Natural killer cell (primary cell): ENCODE measurements at regions of chr14 and their contacts with region 1.

Region 1: GRCh38 chr14:57268161-57269069 is at the starts of genes AP5M1 and EXOC5:
- DNase-seq: peak; percentile 77 to 97
- ATAC-seq: peak; percentile 74 to 86 (median 78)
- H3K4me3 ChIP-seq: peak within 1 kb of the TSS; percentile 76
- H3K4me3 Mint-ChIP-seq: peak within 1 kb of the TSS; percentile 99
- H3K27ac ChIP-seq: peak within 1 kb of the TSS; percentile 86
- H3K27ac Mint-ChIP-seq: peak within 1 kb of the TSS; percentile 98
- H3K4me1 ChIP-seq: peaks cover 9% of the 10 kb centered on the region
- H3K4me1 Mint-ChIP-seq: peaks cover 63 to 76% of the 10 kb centered on the region in 2 donors
- H3K27me3 ChIP-seq: no peaks in the 10 kb centered on the region
- H3K27me3 Mint-ChIP-seq: no peaks in the 10 kb centered on the region
- CTCF ChIP-seq: no peak
- total RNA-seq, gene AP5M1: 46.3 to 64.2 (median 48.8) TPM
- total RNA-seq, gene EXOC5: 37.1 to 42.0 (median 41.7) TPM

Region 2: DNA sequence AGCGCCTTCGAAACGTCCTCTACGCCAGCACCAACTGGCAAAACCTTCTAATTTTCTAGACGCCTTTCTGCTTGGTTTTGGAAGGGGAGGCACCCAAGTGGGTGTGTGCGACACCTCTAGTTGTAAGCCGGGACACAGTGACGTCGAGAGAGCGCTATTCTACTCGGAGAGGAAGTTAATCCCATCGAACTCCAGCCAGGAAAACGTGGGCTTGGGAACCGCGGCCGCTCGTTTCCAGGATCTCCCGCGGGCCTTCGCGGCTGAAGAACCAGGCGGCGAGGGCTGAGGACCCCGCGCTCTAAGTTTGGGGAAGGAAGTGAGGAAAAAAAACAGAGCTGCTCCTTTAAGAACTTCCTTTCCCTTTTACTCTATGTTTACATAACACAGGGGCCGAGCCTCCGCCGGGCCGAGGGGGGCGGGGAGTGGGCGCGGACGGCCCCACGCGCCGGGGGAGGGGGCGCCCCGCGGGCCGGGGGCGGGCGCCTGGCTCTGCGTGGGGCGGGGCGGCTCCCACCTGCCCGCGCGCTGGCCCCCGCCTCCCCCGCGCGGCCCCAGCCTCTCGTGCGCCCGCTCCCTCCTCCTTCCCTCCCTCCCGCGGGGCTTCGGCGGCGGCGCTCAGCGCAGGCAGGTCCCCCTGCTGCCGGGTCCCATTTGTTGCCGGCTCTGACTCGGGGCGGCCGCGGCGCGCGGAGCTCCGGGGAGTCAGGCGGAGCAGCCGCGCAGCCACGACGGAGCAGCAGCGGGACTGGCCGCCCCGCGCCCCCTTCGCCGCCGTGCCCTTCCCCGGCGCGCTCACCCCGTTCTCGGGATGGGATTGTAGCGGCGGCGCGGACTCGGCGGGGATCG is 1150.4 kb before region 1 on chr14 and contains the start of gene PELI2:
- intact Hi-C with region 1: loop called (anchors 5 kb)
- DNase-seq: peak; percentile 84 to 91
- ATAC-seq: peak; percentile 86 to 94 (median 87)
- H3K4me3 ChIP-seq: peak within 1 kb of the TSS; percentile 97
- H3K4me3 Mint-ChIP-seq: peak within 1 kb of the TSS; percentile 97
- H3K27ac ChIP-seq: peak within 1 kb of the TSS; percentile 97
- H3K27ac Mint-ChIP-seq: peak within 1 kb of the TSS; percentile 95 to 96
- H3K4me1 ChIP-seq: peaks cover 17% of the 10 kb centered on the region
- H3K4me1 Mint-ChIP-seq: peaks cover 40 to 42% of the 10 kb centered on the region in 2 donors
- H3K27me3 ChIP-seq: no peaks in the 10 kb centered on the region
- H3K27me3 Mint-ChIP-seq: peaks cover under 1 to 5% of the 10 kb centered on the region in 2 donors
- CTCF ChIP-seq: no peak
- total RNA-seq, gene PELI2: 16.4 to 25.0 (median 24.9) TPM

Region 3: DNA sequence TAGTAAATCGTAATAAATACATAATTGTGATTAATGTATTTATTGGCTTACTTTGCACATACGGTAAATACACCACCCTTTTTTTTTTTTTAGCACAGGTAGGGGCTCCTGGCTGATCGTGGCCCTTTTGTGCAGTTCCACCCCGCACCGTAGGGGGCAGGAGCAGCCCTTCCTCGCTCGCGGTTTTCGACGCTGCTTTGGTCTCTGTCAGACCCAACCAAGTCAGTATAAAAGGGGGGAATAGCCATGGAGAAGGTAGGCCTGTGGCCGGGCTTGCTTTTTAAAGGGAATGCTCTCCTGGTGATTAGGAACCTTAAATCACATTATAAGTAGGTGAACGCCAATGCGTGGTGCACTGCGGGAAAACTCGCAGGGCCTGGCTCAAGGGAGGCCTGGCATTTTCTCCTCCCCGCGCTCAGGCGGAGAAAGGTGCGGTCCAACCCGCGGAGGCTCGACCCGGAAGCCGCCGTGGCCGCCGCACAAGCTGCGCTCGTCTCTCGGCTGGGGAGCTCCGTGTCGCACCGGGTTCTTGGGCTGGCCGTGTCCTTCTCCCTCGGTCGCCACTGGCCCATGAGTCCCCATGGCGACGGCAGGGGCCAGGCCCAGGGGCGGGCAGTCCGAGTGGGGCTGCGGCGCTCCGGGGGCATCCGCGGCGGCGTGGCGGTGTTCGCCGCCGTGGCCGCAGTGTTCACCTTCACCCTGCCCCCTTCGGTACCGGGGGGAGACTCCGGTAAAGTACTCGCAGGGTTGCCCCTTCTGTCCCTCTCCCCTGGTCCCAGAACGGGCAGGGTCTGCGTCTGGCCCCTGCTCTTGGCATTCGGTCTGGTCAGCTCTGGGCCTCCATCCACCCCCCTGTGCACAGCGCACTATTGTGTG is 688.8 kb before region 1 on chr14 and contains the start of gene TMEM260:
- intact Hi-C with region 1: loop called (anchors 5 kb)
- DNase-seq: peak; percentile 88 to 96
- ATAC-seq: peak; percentile 91 to 96 (median 92)
- H3K4me3 ChIP-seq: peak within 1 kb of the TSS; percentile 94
- H3K4me3 Mint-ChIP-seq: peak within 1 kb of the TSS; percentile 92
- H3K27ac ChIP-seq: peak within 1 kb of the TSS; percentile 76
- H3K27ac Mint-ChIP-seq: peak within 1 kb of the TSS; percentile 82 to 92
- H3K4me1 ChIP-seq: peaks cover 6% of the 10 kb centered on the region
- H3K4me1 Mint-ChIP-seq: peaks cover 36 to 39% of the 10 kb centered on the region in 2 donors
- H3K27me3 ChIP-seq: no peaks in the 10 kb centered on the region
- H3K27me3 Mint-ChIP-seq: no peaks in the 10 kb centered on the region
- CTCF ChIP-seq: peak; percentile 96
- total RNA-seq, gene TMEM260: 16.7 to 21.3 (median 20.5) TPM

Region 4: GRCh38 chr14:57287745-57288144 is 19.3 kb after region 1 on chr14:
- intact Hi-C with region 1: no loop called
- DNase-seq: no peak
- ATAC-seq: no peak
- H3K4me3 ChIP-seq: no peak overlapping the region
- H3K4me3 Mint-ChIP-seq: no peak overlapping the region
- H3K27ac ChIP-seq: no peak overlapping the region
- H3K27ac Mint-ChIP-seq: no peak overlapping the region
- H3K4me1 ChIP-seq: no peaks in the 10 kb centered on the region
- H3K4me1 Mint-ChIP-seq: peaks cover 0 to 4% of the 10 kb centered on the region in 2 donors
- H3K27me3 ChIP-seq: no peaks in the 10 kb centered on the region
- H3K27me3 Mint-ChIP-seq: no peaks in the 10 kb centered on the region
- CTCF ChIP-seq: no peak

Region 5: GRCh38 chr14:57390028-57390805 is 121.8 kb after region 1 on chr14 and contains the start of gene NAA30:
- intact Hi-C with region 1: loop called (anchors 2 kb)
- DNase-seq: peak; percentile 87 to 96
- ATAC-seq: peak; percentile 87 to 97 (median 87)
- H3K4me3 ChIP-seq: peak within 1 kb of the TSS; percentile 60
- H3K4me3 Mint-ChIP-seq: peak within 1 kb of the TSS; percentile 94
- H3K27ac ChIP-seq: peak within 1 kb of the TSS; percentile 75
- H3K27ac Mint-ChIP-seq: peak within 1 kb of the TSS; percentile 90 to 98
- H3K4me1 ChIP-seq: peaks cover 23% of the 10 kb centered on the region
- H3K4me1 Mint-ChIP-seq: peaks cover 43 to 50% of the 10 kb centered on the region in 2 donors
- H3K27me3 ChIP-seq: no peaks in the 10 kb centered on the region
- H3K27me3 Mint-ChIP-seq: peaks cover 0 to 3% of the 10 kb centered on the region in 2 donors
- CTCF ChIP-seq: no peak
- total RNA-seq, gene NAA30: 17.1 to 32.6 (median 24.0) TPM